Naive thymus-derived CD4-positive, alpha-beta T cell (primary cell): ENCODE measurements at regions of chr22 and their contacts with region 1.

Region 1: DNA sequence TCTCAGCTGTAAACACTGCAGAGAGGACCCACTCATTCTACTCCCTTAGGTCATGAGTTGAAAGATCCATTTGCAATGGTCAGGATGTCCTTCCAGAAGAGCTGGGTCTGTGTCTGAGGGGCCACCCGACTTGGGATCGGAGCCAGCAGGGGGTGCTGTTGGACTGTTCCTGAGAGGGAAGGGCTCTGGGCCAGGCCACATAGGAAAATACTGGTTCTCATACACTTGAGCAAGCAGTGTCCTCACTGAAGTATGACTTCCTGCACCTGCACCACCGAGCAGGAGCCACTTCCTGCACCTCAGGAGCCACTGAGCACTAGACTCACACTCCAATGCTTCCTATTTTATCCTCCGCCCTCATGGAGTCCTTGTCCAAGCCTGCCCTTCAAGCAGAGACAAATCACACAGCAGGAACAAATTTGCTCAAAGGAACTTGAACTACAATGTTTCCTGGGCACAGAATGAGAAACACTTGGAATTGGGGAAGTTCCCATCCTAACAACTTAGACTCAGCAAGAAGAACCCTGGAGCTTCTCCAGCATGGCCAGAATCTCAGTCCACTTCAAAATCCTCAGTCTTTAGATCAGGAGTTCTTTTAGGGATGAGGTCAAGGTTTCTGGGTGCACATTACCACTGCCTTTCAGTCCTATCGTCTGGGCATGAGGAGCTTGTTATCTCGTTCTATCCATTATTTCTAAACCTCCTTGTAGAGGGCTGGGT is 36.6 kb upstream of the VPREB1 start:
- DNase-seq: peak; percentile 37 to 87 (median 63)
- ATAC-seq: peak; percentile 90
- H3K4me3 ChIP-seq: no peak overlapping the region
- H3K4me3 Mint-ChIP-seq: peak overlapping the region in 6 of 10 donors; percentile 3 to 64 (median 50)
- H3K27ac ChIP-seq: no peak overlapping the region
- H3K27ac Mint-ChIP-seq: peak overlapping the region in 8 of 9 donors; percentile 11 to 75 (median 38)
- H3K4me1 ChIP-seq: peaks cover 4 to 9% of the 10 kb centered on the region in 2 donors
- H3K4me1 Mint-ChIP-seq: peaks cover 9 to 35% (median 28%) of the 10 kb centered on the region in 7 donors
- H3K27me3 ChIP-seq: no peaks in the 10 kb centered on the region
- H3K27me3 Mint-ChIP-seq: peaks cover 0 to 4% (median 0%) of the 10 kb centered on the region in 5 donors

Region 2: GRCh38 chr22:21766691-21767462 is 441.1 kb before region 1 on chr22:
- CTCF ChIA-PET with region 1: no interaction called
- POLR2A ChIA-PET with region 1: no interaction called
- intact Hi-C with region 1: no loop called
- DNase-seq: peak in 1 of 9 donors; percentile 68
- ATAC-seq: peak; percentile 82
- H3K4me3 ChIP-seq: peak overlapping the region; percentile 14
- H3K4me3 Mint-ChIP-seq: peak overlapping the region in 2 of 10 donors; percentile 39 to 59
- H3K27ac ChIP-seq: no peak overlapping the region
- H3K27ac Mint-ChIP-seq: peak overlapping the region in 8 of 9 donors; percentile 36 to 80 (median 57)
- H3K4me1 ChIP-seq: peaks cover 0 to 66% of the 10 kb centered on the region in 2 donors
- H3K4me1 Mint-ChIP-seq: peaks cover 6 to 61% (median 20%) of the 10 kb centered on the region in 7 donors
- H3K27me3 ChIP-seq: no peaks in the 10 kb centered on the region
- H3K27me3 Mint-ChIP-seq: no peaks in the 10 kb centered on the region

Region 3: GRCh38 chr22:22156716-22157347 is 51.2 kb before region 1 on chr22:
- CTCF ChIA-PET with region 1: no interaction called
- POLR2A ChIA-PET with region 1: no interaction called
- intact Hi-C with region 1: no loop called
- DNase-seq: peak; percentile 24 to 66 (median 57)
- ATAC-seq: peak; percentile 93
- H3K4me3 ChIP-seq: no peak overlapping the region
- H3K4me3 Mint-ChIP-seq: peak overlapping the region in 3 of 10 donors; percentile 18 to 42 (median 21)
- H3K27ac ChIP-seq: no peak overlapping the region
- H3K27ac Mint-ChIP-seq: no peak overlapping the region
- H3K4me1 ChIP-seq: no peaks in the 10 kb centered on the region
- H3K4me1 Mint-ChIP-seq: peaks cover 0 to 8% (median 6%) of the 10 kb centered on the region in 7 donors
- H3K27me3 ChIP-seq: no peaks in the 10 kb centered on the region
- H3K27me3 Mint-ChIP-seq: peaks cover 6 to 17% (median 13%) of the 10 kb centered on the region in 5 donors

Region 4: GRCh38 chr22:22342697-22343580 is 134.9 kb after region 1 on chr22:
- CTCF ChIA-PET with region 1: no interaction called
- POLR2A ChIA-PET with region 1: no interaction called
- intact Hi-C with region 1: loop called in 1 of 2 experiments (anchors 2 kb)
- DNase-seq: peak; percentile 8 to 69 (median 42)
- ATAC-seq: peak; percentile 70
- H3K4me3 ChIP-seq: no peak overlapping the region
- H3K4me3 Mint-ChIP-seq: no peak overlapping the region
- H3K27ac ChIP-seq: no peak overlapping the region
- H3K27ac Mint-ChIP-seq: no peak overlapping the region
- H3K4me1 ChIP-seq: no peaks in the 10 kb centered on the region
- H3K4me1 Mint-ChIP-seq: peaks cover 0 to 4% (median 0%) of the 10 kb centered on the region in 7 donors
- H3K27me3 ChIP-seq: no peaks in the 10 kb centered on the region
- H3K27me3 Mint-ChIP-seq: peaks cover 5 to 28% (median 14%) of the 10 kb centered on the region in 5 donors